ENCODE measurements at regions of chr12 and their contacts with region 1.

Region 1: GRCh38 chr12:107093417-107094182 is at the start of gene CRY1:
- DNase-seq: peak; percentile 95
- H3K4me3 ChIP-seq: peak within 1 kb of the TSS; percentile 83 to 96 (median 90)
- H3K27ac ChIP-seq: peak within 1 kb of the TSS; percentile 95 to 98 (median 97)
- H3K4me1 ChIP-seq: peaks cover 6 to 27% (median 16%) of the 10 kb centered on the region in 4 donors
- H3K27me3 ChIP-seq: no peaks in the 10 kb centered on the region
- CTCF ChIP-seq: peak in 1 of 5 experiments; percentile 6
- EP300 ChIP-seq: no peak
- POLR2A ChIP-seq: peak; percentile 94
- total RNA-seq, gene CRY1: 10.1 to 71.8 (median 21.0) TPM

Region 2: DNA sequence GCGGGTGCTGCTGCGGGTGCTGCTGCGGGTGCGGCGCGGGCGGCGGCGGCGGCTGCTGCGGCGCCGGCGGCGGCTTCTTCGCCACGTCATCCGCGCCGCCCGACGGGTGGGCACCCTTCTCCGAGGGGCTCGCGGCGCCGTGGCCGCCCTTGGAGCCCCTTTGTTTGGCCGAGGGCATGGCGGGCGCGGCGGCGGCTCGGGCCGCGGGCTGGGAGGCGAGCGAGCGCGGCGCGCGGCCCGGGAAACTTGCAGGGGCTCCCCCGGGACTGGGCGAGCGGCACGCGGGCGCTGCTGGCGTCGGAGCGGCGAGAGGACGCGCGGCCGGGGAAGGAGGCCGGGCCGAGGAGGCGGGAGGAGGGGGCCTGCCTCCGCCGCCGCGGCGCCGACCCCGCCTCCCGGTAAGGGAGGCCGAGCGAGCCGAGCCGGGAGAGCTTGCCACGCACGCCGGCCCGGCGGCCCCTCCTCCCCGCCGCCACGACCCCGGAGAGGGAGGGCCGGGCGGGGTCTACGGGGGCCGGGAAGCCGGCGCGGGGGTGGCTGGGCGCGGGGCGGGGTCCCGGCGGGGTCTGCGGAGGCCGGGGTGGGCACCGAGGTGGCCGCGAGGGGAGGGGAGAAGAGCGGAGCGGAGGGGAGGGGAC is 845.8 kb before region 1 on chr12 and contains the start of gene CKAP4:
- in situ Hi-C with region 1: no loop called
- intact Hi-C with region 1: loop called (anchors 10 kb)
- DNase-seq: peak; percentile 81
- H3K4me3 ChIP-seq: peak within 1 kb of the TSS; percentile 65 to 82 (median 74)
- H3K27ac ChIP-seq: peak within 1 kb of the TSS; percentile 92 to 99 (median 98)
- H3K4me1 ChIP-seq: peaks cover 34 to 46% (median 37%) of the 10 kb centered on the region in 4 donors
- H3K27me3 ChIP-seq: no peaks in the 10 kb centered on the region
- CTCF ChIP-seq: no peak
- EP300 ChIP-seq: no peak
- POLR2A ChIP-seq: no peak
- total RNA-seq, gene CKAP4: 30.6 to 41.4 (median 36.2) TPM

Region 3: GRCh38 chr12:106774005-106774807 is 319.4 kb before region 1 on chr12 and contains the start of gene RIC8B:
- in situ Hi-C with region 1: no loop called
- intact Hi-C with region 1: loop called (anchors 10 kb)
- DNase-seq: peak; percentile 96
- H3K4me3 ChIP-seq: peak within 1 kb of the TSS; percentile 79 to 96 (median 94)
- H3K27ac ChIP-seq: peak within 1 kb of the TSS; percentile 90 to 93 (median 93)
- H3K4me1 ChIP-seq: peaks cover 6 to 33% (median 10%) of the 10 kb centered on the region in 4 donors
- H3K27me3 ChIP-seq: no peaks in the 10 kb centered on the region
- CTCF ChIP-seq: no peak
- EP300 ChIP-seq: no peak
- POLR2A ChIP-seq: peak; percentile 76
- total RNA-seq, gene RIC8B: 10.5 to 19.5 (median 16.6) TPM

Region 4: GRCh38 chr12:106974511-106974910 is 119.1 kb before region 1 on chr12:
- in situ Hi-C with region 1: no loop called
- intact Hi-C with region 1: loop called (anchors 5 kb)
- DNase-seq: no peak
- H3K4me3 ChIP-seq: no peak overlapping the region
- H3K27ac ChIP-seq: peak overlapping the region in 3 of 4 donors; percentile 9 to 60 (median 35)
- H3K4me1 ChIP-seq: peaks cover 25 to 63% (median 42%) of the 10 kb centered on the region in 4 donors
- H3K27me3 ChIP-seq: no peaks in the 10 kb centered on the region
- CTCF ChIP-seq: no peak
- EP300 ChIP-seq: no peak
- POLR2A ChIP-seq: no peak

Region 5: GRCh38 chr12:107057071-107057818 is 36.4 kb before region 1 on chr12:
- in situ Hi-C with region 1: no loop called
- intact Hi-C with region 1: no loop called
- DNase-seq: no peak
- H3K4me3 ChIP-seq: no peak overlapping the region
- H3K27ac ChIP-seq: peak overlapping the region in 1 of 4 donors; percentile 8
- H3K4me1 ChIP-seq: peaks cover 0 to 21% (median 2%) of the 10 kb centered on the region in 4 donors
- H3K27me3 ChIP-seq: no peaks in the 10 kb centered on the region
- CTCF ChIP-seq: peak in 1 of 5 experiments; percentile 7
- EP300 ChIP-seq: no peak
- POLR2A ChIP-seq: no peak

Region 6: DNA sequence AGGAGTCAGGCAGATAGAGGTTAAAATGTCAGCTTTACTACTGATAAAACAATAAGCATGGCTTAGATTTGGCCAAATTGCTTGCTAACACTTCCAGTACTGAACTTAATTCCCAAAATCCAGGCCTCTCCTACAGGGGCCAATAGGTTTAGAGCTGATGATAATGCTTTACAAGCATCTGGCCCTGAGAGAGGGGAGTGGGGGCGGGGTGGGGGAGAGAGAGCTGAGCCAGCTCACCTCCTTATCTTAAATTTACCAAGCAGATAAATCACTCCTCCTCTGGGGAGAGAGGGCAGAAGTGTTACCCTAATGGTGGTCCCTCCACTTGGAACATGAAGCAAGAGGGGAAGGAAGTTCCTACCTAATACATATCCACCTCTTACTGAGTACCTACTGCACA is 181.9 kb after region 1 on chr12:
- in situ Hi-C with region 1: no loop called
- intact Hi-C with region 1: no loop called
- DNase-seq: no peak
- H3K4me3 ChIP-seq: no peak overlapping the region
- H3K27ac ChIP-seq: no peak overlapping the region
- H3K4me1 ChIP-seq: no peaks in the 10 kb centered on the region
- H3K27me3 ChIP-seq: no peaks in the 10 kb centered on the region
- CTCF ChIP-seq: no peak
- EP300 ChIP-seq: no peak
- POLR2A ChIP-seq: no peak